Activated naive CD4-positive, alpha-beta T cell treated with anti-CD3 and anti-CD28 coated beads for 36 hours (primary cell): ENCODE measurements at regions of chr2 and their contacts with region 1.

Region 1: DNA sequence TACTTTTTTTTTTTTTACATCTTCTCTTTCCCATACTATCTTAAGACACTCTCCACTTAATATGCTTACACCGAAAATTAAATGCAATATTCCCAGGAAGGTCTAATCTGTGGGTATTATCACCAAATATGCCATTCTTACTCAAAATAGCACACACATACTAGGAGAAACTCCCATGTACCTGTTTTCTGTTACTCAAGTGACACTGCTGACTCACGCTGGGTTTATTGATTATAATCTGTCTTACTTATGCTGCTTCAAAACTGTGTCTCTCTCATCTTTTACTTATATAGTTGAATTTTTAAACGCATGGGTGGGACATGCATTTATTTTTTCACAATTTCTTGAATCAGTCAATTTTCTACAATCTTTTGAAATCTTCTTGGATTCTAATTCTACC is 29.9 kb downstream of the MRPL19 start:
- DNase-seq: no peak
- H3K4me3 Mint-ChIP-seq: no peak overlapping the region
- H3K27ac Mint-ChIP-seq: no peak overlapping the region
- H3K4me1 Mint-ChIP-seq: peaks cover 8% of the 10 kb centered on the region
- H3K27me3 Mint-ChIP-seq: no peaks in the 10 kb centered on the region

Region 2: DNA sequence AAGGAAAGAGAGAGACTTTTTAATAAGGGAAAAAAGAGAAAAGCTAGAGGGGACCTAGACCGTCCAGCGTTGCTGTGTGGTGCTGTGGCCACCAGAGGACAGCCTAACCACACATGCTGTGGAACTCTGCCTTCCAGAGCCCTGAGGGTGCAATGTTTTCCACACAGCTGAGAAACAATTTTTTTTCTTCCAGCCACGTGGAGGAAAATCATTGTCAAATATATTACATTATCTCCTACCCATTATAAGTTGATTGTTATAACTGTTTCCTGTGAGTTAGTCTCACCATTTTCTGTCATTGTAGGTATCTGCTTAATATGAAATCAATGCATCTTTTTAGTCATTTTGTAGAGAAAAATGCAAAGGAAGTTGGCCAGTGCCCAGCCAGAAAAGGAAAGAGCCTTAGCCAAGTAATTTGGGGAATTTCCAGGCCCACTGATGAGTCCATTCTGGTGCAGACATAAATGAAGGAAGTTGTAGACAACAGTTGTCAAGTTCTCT is 35.8 kb before region 1 on chr2:
- CTCF ChIA-PET with region 1: interaction called, 19 read pairs
- intact Hi-C with region 1: loop called (anchors 1 kb)
- DNase-seq: peak; percentile 69
- H3K4me3 Mint-ChIP-seq: no peak overlapping the region
- H3K27ac Mint-ChIP-seq: no peak overlapping the region
- H3K4me1 Mint-ChIP-seq: peaks cover 6% of the 10 kb centered on the region
- H3K27me3 Mint-ChIP-seq: peaks cover 17% of the 10 kb centered on the region

Region 3: DNA sequence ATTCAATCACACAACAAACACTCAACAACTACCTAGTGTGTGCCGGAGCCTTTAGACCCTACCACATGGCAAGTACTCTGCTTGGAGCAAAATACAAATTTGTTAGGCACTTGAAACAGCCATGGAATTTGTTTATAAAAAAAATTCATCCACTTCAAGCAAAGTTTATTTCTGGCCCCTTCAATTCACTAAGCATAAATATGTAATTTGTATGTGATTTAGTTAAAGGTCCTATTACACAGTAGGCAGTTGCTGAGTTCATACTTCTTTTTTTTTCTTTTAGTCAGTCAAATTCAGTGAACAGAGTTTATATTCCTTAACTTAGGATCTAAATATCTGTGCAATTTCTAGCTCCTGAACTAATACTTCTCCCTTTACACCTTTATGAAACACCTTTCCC is 11.7 kb after region 1 on chr2:
- CTCF ChIA-PET with region 1: interaction called, 12 read pairs
- intact Hi-C with region 1: no loop called
- DNase-seq: no peak
- H3K4me3 Mint-ChIP-seq: no peak overlapping the region
- H3K27ac Mint-ChIP-seq: no peak overlapping the region
- H3K4me1 Mint-ChIP-seq: peaks cover 2% of the 10 kb centered on the region
- H3K27me3 Mint-ChIP-seq: no peaks in the 10 kb centered on the region

Region 4: DNA sequence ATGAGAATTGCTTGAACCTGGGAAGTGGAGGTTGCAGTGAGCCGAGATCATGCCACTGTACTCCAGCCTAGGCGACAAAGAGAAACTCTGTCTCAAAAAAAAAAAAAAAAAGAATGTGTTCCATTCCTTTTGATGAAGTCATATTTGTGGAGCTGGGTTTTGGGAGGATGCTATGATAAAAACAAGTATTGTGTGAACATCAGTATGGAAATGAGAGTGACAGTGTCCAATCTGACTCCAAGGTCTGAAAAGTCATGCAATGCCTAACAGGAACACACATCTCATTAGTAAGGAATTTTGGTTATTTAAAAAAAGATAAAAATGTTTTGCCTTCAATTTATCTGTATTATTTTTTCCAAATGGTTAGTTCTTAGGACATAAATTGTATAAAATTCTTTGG is 22.5 kb after region 1 on chr2:
- CTCF ChIA-PET with region 1: no interaction called
- intact Hi-C with region 1: loop called (anchors 2 kb)
- DNase-seq: no peak
- H3K4me3 Mint-ChIP-seq: no peak overlapping the region
- H3K27ac Mint-ChIP-seq: no peak overlapping the region
- H3K4me1 Mint-ChIP-seq: peaks cover 4% of the 10 kb centered on the region
- H3K27me3 Mint-ChIP-seq: no peaks in the 10 kb centered on the region

Region 5: GRCh38 chr2:75710577-75711253 is 34.3 kb after region 1 on chr2 and contains the start of gene GCFC2:
- CTCF ChIA-PET with region 1: no interaction called
- intact Hi-C with region 1: loop called (anchors 2 kb)
- DNase-seq: peak; percentile 87
- H3K4me3 Mint-ChIP-seq: peak within 1 kb of the TSS; percentile 91
- H3K27ac Mint-ChIP-seq: peak within 1 kb of the TSS; percentile 97
- H3K4me1 Mint-ChIP-seq: peaks cover 28% of the 10 kb centered on the region
- H3K27me3 Mint-ChIP-seq: no peaks in the 10 kb centered on the region
- total RNA-seq, gene GCFC2: 30.5 to 36.4 TPM

Region 6: GRCh38 chr2:76120176-76120575 is 443.7 kb after region 1 on chr2:
- CTCF ChIA-PET with region 1: no interaction called
- intact Hi-C with region 1: no loop called
- DNase-seq: no peak
- H3K4me3 Mint-ChIP-seq: no peak overlapping the region
- H3K27ac Mint-ChIP-seq: no peak overlapping the region
- H3K4me1 Mint-ChIP-seq: no peaks in the 10 kb centered on the region
- H3K27me3 Mint-ChIP-seq: no peaks in the 10 kb centered on the region